ENCODE measurements at regions of chr11 and their contacts with region 1.

Region 1: GRCh38 chr11:99814738-99815137 is 794.0 kb downstream of the CNTN5 start:
- DNase-seq: no peak
- ATAC-seq: no peak
- H3K4me3 ChIP-seq: no peak overlapping the region
- H3K4me3 Mint-ChIP-seq: no peak overlapping the region
- H3K27ac ChIP-seq: no peak overlapping the region
- H3K27ac Mint-ChIP-seq: no peak overlapping the region
- H3K4me1 ChIP-seq: no peaks in the 10 kb centered on the region
- H3K4me1 Mint-ChIP-seq: no peaks in the 10 kb centered on the region
- H3K27me3 ChIP-seq: no peaks in the 10 kb centered on the region
- H3K27me3 Mint-ChIP-seq: no peaks in the 10 kb centered on the region
- CTCF ChIP-seq: no peak

Region 2: DNA sequence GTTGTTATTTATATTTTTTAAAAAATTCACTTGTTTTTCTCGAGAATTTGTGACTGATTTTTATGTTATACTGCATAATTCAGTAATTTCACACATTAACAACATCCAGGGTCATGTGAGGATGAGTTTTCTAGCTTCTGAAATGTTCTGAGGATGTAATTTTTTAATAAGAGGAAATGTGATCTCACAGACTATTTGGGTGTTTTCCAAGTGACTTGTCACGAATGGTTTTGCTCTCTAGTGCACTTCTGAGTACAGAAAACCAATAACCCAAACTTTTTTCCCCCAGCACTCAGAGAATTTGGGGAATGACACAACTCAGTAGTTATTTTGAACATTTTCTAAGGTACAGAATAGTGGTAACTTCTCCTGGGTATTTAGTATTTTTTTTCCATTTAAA is 51.2 kb after region 1 on chr11:
- CTCF ChIA-PET with region 1: no interaction called
- POLR2A ChIA-PET with region 1: no interaction called
- intact Hi-C with region 1: loop called in 1 of 2 experiments (anchors 5 kb)
- DNase-seq: no peak
- ATAC-seq: no peak
- H3K4me3 ChIP-seq: no peak overlapping the region
- H3K4me3 Mint-ChIP-seq: no peak overlapping the region
- H3K27ac ChIP-seq: no peak overlapping the region
- H3K27ac Mint-ChIP-seq: no peak overlapping the region
- H3K4me1 ChIP-seq: no peaks in the 10 kb centered on the region
- H3K4me1 Mint-ChIP-seq: no peaks in the 10 kb centered on the region
- H3K27me3 ChIP-seq: no peaks in the 10 kb centered on the region
- H3K27me3 Mint-ChIP-seq: no peaks in the 10 kb centered on the region
- CTCF ChIP-seq: no peak

Measured in CD8-positive, alpha-beta T cell (primary cell).